Activated naive CD8-positive, alpha-beta T cell treated with anti-CD3 and anti-CD28 coated beads, Interleukin-2, amount 10 ng/mL, durations not matched to agents 7 days and 5 days (primary cell): ENCODE measurements at regions of chr2 and their contacts with region 1.

Region 1: GRCh38 chr2:113181258-113182051 is 7.7 kb downstream of the PSD4 start:
- DNase-seq: no peak
- ATAC-seq: peak; percentile 43
- H3K4me3 Mint-ChIP-seq: peak overlapping the region; percentile 95
- H3K27ac Mint-ChIP-seq: peak overlapping the region; percentile 85
- H3K4me1 Mint-ChIP-seq: peaks cover 78% of the 10 kb centered on the region
- H3K27me3 Mint-ChIP-seq: no peaks in the 10 kb centered on the region

Region 2: GRCh38 chr2:113078350-113078839 is 103.1 kb before region 1 on chr2:
- POLR2A ChIA-PET with region 1: no interaction called
- DNase-seq: no peak
- ATAC-seq: no peak
- H3K4me3 Mint-ChIP-seq: no peak overlapping the region
- H3K27ac Mint-ChIP-seq: no peak overlapping the region
- H3K4me1 Mint-ChIP-seq: peaks cover 22% of the 10 kb centered on the region
- H3K27me3 Mint-ChIP-seq: peaks cover 11% of the 10 kb centered on the region

Region 3: DNA sequence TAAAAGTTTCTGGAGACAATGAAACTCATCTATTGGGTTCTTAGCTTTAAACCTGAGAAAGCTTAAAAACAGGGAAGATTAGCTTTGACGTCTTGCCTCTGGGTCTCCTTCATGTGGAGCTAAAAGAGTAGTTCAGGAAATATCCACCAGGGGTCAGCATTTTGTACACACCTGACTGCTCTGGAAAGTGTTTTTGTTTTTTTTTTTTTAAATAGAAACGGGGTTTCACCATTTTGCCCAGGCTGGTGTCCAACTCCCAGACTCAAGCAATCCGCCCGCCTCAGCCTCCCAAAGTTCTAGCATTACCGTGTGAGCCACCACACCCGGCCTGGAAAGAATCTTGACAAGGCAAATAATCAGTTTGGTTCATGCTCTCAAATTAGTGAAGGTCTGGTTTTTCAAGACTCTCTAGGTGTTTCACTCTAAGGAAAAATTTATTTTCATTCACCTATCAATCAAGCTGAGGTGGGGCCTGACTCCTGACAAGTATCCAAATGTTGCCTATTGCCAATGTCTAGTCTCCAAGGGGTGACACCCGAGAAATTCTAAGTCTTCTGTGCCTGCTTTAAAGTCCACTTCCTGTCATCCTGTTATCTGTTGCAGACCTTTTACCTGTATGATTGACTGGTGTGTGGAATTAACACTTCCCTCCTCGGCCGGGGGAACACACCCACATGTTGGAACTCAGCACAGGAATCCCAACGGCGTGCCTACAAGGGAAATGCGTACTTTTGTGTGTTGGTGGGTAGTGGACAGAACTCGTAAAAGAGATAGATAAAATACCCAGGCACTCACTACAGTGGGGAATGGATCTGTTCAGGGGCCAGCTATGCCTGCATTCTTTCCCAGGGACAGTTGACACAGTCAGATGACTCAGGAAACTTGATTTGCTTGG is 42.8 kb before region 1 on chr2:
- POLR2A ChIA-PET with region 1: interaction called, 36 read pairs
- DNase-seq: no peak
- ATAC-seq: peak; percentile 74
- H3K4me3 Mint-ChIP-seq: peak overlapping the region; percentile 73
- H3K27ac Mint-ChIP-seq: peak overlapping the region; percentile 84
- H3K4me1 Mint-ChIP-seq: peaks cover 28% of the 10 kb centered on the region
- H3K27me3 Mint-ChIP-seq: peaks cover 4% of the 10 kb centered on the region

Region 4: GRCh38 chr2:113157118-113157896 is 24.1 kb before region 1 on chr2:
- POLR2A ChIA-PET with region 1: interaction called, 85 read pairs
- DNase-seq: peak; percentile 77
- ATAC-seq: peak; percentile 86
- H3K4me3 Mint-ChIP-seq: peak overlapping the region; percentile 85
- H3K27ac Mint-ChIP-seq: peak overlapping the region; percentile 80
- H3K4me1 Mint-ChIP-seq: peaks cover 24% of the 10 kb centered on the region
- H3K27me3 Mint-ChIP-seq: peaks cover 2% of the 10 kb centered on the region

Region 5: DNA sequence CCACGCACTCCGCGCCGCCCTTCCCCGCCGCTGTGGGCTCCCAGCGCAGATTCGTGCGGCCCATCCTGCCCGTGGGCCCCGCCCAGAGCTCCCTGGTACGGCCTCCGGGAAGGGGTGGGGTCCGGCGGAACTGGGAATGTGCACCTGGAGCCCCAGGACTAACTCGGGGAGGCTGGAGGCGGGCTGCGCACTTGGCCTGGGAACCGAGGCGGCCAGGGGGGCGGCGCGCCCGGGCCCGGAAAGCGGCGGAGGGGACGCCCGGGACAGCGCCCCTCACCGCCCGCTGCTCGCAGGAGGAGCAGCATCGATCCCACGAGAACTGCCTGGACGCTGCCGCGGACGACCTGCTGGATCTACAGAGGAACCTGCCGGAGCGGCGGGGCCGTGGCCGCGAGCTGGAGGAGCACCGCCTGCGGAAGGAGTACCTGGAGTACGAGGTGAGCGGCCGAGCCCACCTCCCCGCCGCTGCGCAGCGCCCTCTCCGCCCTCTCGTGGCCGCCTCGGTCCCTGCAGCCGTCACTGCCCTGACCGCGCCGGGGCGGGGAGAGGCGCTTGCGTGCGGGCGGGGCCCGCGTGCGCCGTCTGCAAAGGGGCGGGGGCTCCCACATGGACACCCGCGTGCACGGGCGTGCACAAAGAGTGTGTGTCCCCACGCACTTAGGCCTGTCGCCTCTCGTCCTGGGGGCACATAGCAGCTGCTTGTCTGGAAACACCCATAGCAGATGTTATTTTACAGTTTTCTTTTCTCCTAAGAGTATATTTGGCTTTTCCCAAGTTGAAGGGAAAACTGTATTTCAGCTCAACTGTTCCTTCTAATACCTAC is 17.5 kb after region 1 on chr2:
- POLR2A ChIA-PET with region 1: interaction called, 68 read pairs
- DNase-seq: peak; percentile 93
- ATAC-seq: peak; percentile 71
- H3K4me3 Mint-ChIP-seq: no peak overlapping the region
- H3K27ac Mint-ChIP-seq: no peak overlapping the region
- H3K4me1 Mint-ChIP-seq: peaks cover 53% of the 10 kb centered on the region
- H3K27me3 Mint-ChIP-seq: no peaks in the 10 kb centered on the region

Region 6: DNA sequence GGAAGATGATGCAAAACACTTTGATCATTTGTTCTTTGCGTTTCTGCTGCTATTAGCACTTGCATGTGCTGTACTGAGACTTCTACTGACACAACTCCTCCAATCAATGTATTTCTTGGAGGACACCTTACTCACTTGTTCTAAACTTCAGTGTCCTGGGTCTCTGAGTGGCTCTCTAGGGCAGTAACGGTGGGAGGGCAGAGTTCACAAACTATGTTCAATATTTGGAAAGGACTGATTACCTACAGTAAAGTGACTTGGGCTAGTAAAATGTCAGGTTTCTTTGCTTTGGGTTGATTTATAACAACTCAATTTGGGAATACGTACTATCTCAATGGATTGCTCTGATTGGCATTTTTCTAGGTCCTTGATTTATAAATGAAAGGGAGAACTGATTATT is 146.6 kb after region 1 on chr2:
- POLR2A ChIA-PET with region 1: no interaction called
- DNase-seq: no peak
- ATAC-seq: no peak
- H3K4me3 Mint-ChIP-seq: no peak overlapping the region
- H3K27ac Mint-ChIP-seq: no peak overlapping the region
- H3K4me1 Mint-ChIP-seq: peaks cover 11% of the 10 kb centered on the region
- H3K27me3 Mint-ChIP-seq: peaks cover 21% of the 10 kb centered on the region